MCF 10A (cell line): ENCODE measurements at regions of chr10 and their contacts with region 1.

Region 1: GRCh38 chr10:107971973-107972372 is 807.5 kb upstream of the SORCS1 start:
- DNase-seq: peak; percentile 89
- H3K4me3 Mint-ChIP-seq: peak overlapping the region; percentile 22
- H3K27ac Mint-ChIP-seq: peak overlapping the region; percentile 92
- H3K4me1 Mint-ChIP-seq: peaks cover 34% of the 10 kb centered on the region
- H3K27me3 Mint-ChIP-seq: no peaks in the 10 kb centered on the region
- CTCF ChIP-seq: no peak

Region 2: DNA sequence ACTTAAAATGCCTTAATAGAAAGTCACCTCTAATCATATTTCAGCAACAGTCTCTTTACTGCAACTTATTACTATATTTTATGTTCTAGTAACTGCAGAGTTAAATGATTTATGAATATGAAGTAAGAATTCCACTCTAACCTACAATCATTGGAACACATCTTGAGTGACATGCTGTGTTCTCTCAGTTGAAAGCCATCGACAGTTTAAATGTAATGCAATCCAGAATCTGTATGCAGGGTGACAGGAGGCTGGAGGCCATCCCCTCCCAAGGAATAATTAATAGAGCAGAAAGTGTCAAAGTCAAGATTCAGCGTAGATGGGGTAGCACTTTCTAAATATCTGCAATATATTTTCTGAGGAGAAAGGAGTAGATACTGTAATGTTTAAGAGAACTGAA is 217.2 kb before region 1 on chr10:
- CTCF ChIA-PET with region 1: no interaction called
- POLR2A ChIA-PET with region 1: no interaction called
- intact Hi-C with region 1: no loop called
- DNase-seq: no peak
- H3K4me3 Mint-ChIP-seq: no peak overlapping the region
- H3K27ac Mint-ChIP-seq: no peak overlapping the region
- H3K4me1 Mint-ChIP-seq: no peaks in the 10 kb centered on the region
- H3K27me3 Mint-ChIP-seq: no peaks in the 10 kb centered on the region
- CTCF ChIP-seq: no peak

Region 3: DNA sequence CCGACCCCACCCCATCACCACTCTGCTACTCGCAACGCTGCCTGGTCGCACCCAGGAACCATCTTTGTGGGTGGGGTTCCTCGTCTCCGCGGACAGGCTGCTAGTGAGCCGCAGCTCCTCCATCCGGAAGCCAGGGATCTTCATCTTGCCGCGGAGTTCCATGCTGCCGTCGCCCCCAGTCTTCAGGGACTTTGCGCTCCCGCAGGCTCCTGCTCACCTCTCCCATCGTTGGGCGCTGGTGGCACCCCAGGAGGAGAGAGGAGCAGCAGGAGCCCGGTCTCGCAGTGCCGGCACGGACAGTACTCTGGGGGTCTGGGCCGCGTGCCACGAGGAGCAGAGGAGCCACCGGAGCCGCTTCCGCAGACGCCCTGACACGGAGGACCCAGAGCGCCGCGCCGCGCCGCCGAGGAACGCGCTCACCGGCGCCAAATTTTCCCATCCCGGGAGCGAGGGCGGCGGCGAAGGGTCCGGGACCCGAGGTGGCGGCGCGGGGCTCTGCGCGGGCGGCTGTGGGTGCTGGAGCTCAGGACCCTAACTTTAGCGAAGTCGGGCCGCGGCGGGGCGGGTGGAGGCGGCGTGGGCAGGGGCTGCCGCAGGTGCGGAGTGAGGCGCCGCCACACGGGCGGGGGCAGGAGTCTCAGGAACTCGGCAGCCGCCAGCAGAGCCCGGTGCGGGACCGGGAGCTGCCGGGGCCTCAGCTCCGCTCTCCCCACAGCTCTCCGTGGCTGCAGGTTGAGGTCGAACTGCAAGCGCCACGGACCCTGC is 57.3 kb before region 1 on chr10:
- CTCF ChIA-PET with region 1: no interaction called
- POLR2A ChIA-PET with region 1: interaction called, 5 read pairs
- intact Hi-C with region 1: loop called (anchors 2 kb)
- DNase-seq: peak; percentile 9
- H3K4me3 Mint-ChIP-seq: peak overlapping the region; percentile 68
- H3K27ac Mint-ChIP-seq: no peak overlapping the region
- H3K4me1 Mint-ChIP-seq: peaks cover 9% of the 10 kb centered on the region
- H3K27me3 Mint-ChIP-seq: no peaks in the 10 kb centered on the region
- CTCF ChIP-seq: no peak

Region 4: GRCh38 chr10:108358912-108359311 is 386.9 kb after region 1 on chr10:
- CTCF ChIA-PET with region 1: no interaction called
- POLR2A ChIA-PET with region 1: no interaction called
- intact Hi-C with region 1: loop called (anchors 10 kb)
- DNase-seq: peak; percentile 88
- H3K4me3 Mint-ChIP-seq: no peak overlapping the region
- H3K27ac Mint-ChIP-seq: peak overlapping the region; percentile 2
- H3K4me1 Mint-ChIP-seq: peaks cover 6% of the 10 kb centered on the region
- H3K27me3 Mint-ChIP-seq: no peaks in the 10 kb centered on the region
- CTCF ChIP-seq: peak; percentile 31